Mucosa of descending colon (tissue), 3 donors: ENCODE measurements at regions of chr10 and their contacts with region 1.

Region 1: GRCh38 chr10:91163269-91163868 is 57.1 kb upstream of the PCGF5 start:
- DNase-seq: peak; percentile 67 to 85 (median 79)
- ATAC-seq: peak; percentile 67
- H3K4me3 ChIP-seq: peak overlapping the region; percentile 86
- H3K4me1 ChIP-seq: no peaks in the 10 kb centered on the region
- CTCF ChIP-seq: no peak

Region 2: DNA sequence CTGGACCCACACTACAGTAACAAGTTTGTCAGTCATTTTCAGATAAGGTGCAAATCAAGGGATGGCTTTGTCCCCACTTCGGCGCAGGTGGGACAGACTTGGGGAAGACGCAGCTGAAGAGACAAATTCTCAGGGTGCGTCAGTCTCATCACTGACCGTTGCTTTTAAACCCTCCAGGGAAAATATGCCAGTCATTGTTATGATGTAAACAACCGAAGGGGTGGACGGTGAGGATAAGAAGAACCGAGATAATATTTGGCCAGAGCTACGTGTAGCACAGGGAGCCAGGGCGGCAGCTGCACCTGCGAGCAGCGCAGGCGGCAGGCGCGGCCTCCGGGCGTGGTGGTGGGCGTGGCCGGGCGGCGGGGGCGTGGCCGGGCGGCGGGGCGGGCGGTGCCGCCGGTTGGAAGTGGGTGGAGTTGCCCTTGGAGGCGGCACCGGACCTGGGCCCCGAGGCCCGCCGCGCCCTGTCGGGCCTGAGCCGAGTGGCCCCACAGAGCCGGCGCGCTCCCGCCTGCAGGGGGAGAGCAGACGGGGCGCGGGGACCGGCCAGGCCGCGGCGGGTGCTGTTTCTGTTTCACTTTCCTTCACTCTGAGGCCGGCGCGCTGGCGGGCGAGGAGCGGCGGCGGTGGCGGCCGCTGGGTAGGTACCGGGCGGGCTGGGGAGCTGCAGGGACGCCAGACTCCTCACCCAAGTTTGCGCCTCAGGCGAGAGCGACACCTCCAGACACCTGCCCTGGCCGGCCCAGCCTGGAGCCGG is 57.0 kb after region 1 on chr10 and contains the start of gene PCGF5:
- intact Hi-C with region 1: loop called in 1 of 2 experiments (anchors 10 kb)
- DNase-seq: peak; percentile 92 to 98 (median 96)
- ATAC-seq: peak; percentile 98
- H3K4me3 ChIP-seq: peak within 1 kb of the TSS; percentile 84
- H3K4me1 ChIP-seq: peaks cover 21% of the 10 kb centered on the region
- CTCF ChIP-seq: peak; percentile 42
- total RNA-seq, gene PCGF5: 65.0 to 76.1 (median 65.8) TPM